Posterior cingulate gyrus (tissue), 11 donors: ENCODE measurements at regions of chr14 and their contacts with region 1.

Region 1: GRCh38 chr14:26589810-26590367 is 7.9 kb downstream of the NOVA1 start:
- DNase-seq: no peak

Region 2: GRCh38 chr14:26517771-26518170 is 72.1 kb before region 1 on chr14:
- intact Hi-C with region 1: loop called (anchors 10 kb)
- DNase-seq: no peak